Adrenal gland (tissue), 19 donors: ENCODE measurements at regions of chr5 and their contacts with region 1.

Region 1: GRCh38 chr5:145811834-145812625 is 23.1 kb downstream of the PRELID2 start:
- DNase-seq: peak; percentile 24 to 74 (median 32)
- H3K4me3 ChIP-seq: no peak overlapping the region
- H3K27ac ChIP-seq: no peak overlapping the region
- H3K4me1 ChIP-seq: no peaks in the 10 kb centered on the region
- H3K27me3 ChIP-seq: no peaks in the 10 kb centered on the region
- CTCF ChIP-seq: peak in 5 of 6 experiments; percentile 20 to 57 (median 45)
- POLR2A ChIP-seq: no peak

Region 2: DNA sequence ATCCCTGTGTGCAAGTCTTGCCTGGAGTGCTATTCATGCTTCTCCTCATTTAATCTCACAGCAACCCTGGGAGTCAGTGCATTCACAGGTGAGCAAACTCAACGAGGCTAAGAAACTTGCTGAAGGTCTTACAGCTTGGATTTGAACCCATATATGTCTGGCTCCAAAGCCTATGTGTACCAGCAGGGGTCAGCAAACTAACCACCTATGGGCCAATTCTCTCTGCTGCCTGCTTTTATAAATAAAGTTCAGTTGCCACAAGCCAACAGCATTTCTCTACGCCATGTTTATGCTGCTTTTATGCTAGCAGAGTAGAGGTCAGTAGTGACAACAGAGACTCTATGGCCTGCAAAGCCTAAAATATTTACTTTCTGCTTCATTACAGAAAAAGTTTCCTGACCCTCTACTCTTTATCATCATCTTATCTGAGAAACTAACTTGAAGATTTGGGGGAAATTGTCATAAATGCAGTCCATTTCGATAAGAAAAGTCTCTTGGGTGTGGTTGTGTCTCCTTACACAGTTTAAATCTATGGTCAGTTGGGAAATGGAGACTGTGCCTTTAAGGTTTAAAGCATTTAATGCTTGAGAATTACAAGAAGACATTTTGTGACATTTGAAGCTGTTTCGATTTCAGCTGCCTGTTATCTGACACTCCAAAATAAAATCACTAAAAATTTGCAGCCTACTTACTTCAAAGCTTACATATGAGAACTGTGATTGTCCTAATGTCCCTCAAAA is 114.6 kb before region 1 on chr5:
- intact Hi-C with region 1: loop called in 1 of 2 experiments (anchors 10 kb)
- DNase-seq: peak in 4 of 7 donors; percentile 16 to 59 (median 38)
- H3K4me3 ChIP-seq: no peak overlapping the region
- H3K27ac ChIP-seq: no peak overlapping the region
- H3K4me1 ChIP-seq: no peaks in the 10 kb centered on the region
- H3K27me3 ChIP-seq: no peaks in the 10 kb centered on the region
- CTCF ChIP-seq: peak in 5 of 6 experiments; percentile 19 to 54 (median 50)
- POLR2A ChIP-seq: no peak

Region 3: GRCh38 chr5:146306838-146307237 is 494.8 kb after region 1 on chr5:
- intact Hi-C with region 1: no loop called
- DNase-seq: no peak
- H3K4me3 ChIP-seq: no peak overlapping the region
- H3K27ac ChIP-seq: no peak overlapping the region
- H3K4me1 ChIP-seq: no peaks in the 10 kb centered on the region
- H3K27me3 ChIP-seq: no peaks in the 10 kb centered on the region
- CTCF ChIP-seq: no peak
- POLR2A ChIP-seq: no peak